ENCODE measurements at regions of chr12 and their contacts with region 1.

Region 1: GRCh38 chr12:123983822-123984485 is 10.9 kb downstream of the ZNF664 start:
- DNase-seq: no peak
- H3K4me3 ChIP-seq: no peak overlapping the region
- CTCF ChIP-seq: peak; percentile 64

Region 2: DNA sequence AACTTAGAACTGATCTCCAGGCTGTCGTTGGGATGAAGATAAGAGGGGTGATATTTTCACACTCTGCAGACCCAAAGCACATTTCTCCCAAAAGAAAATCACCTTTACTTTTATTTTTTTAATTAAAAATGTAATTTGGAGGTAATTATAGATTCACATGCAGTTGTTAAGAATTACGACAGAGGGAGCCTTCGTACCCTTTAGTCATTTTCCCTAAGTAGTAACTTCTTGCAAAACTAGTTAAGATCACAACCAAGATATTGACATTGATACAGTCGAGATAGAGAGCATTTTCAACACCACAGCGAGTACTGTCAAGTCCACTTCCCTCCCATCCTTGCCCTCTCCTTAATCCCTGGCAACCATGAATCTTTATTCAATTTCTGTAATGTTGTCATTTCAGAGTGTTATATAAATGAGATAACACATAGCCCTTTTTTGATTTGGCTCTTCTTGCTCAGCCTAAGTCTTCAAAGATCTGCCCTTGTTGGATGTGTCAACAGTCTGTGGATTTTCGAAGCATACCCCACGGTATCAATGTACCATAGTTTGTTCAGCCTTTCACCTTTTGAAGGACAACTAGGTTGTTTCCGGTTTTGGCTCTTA is 182.3 kb before region 1 on chr12:
- CTCF ChIA-PET with region 1: interaction called, 94 read pairs
- POLR2A ChIA-PET with region 1: no interaction called
- DNase-seq: no peak
- H3K4me3 ChIP-seq: no peak overlapping the region
- CTCF ChIP-seq: peak; percentile 37

Region 3: GRCh38 chr12:123961585-123962345 is 22.2 kb before region 1 on chr12:
- CTCF ChIA-PET with region 1: no interaction called
- POLR2A ChIA-PET with region 1: no interaction called
- DNase-seq: no peak
- H3K4me3 ChIP-seq: no peak overlapping the region
- CTCF ChIP-seq: no peak

Region 4: GRCh38 chr12:123995023-123995748 is 11.2 kb after region 1 on chr12:
- CTCF ChIA-PET with region 1: interaction called, 35 read pairs
- POLR2A ChIA-PET with region 1: interaction called, 4 read pairs
- DNase-seq: no peak
- H3K4me3 ChIP-seq: no peak overlapping the region
- CTCF ChIP-seq: no peak

Region 5: DNA sequence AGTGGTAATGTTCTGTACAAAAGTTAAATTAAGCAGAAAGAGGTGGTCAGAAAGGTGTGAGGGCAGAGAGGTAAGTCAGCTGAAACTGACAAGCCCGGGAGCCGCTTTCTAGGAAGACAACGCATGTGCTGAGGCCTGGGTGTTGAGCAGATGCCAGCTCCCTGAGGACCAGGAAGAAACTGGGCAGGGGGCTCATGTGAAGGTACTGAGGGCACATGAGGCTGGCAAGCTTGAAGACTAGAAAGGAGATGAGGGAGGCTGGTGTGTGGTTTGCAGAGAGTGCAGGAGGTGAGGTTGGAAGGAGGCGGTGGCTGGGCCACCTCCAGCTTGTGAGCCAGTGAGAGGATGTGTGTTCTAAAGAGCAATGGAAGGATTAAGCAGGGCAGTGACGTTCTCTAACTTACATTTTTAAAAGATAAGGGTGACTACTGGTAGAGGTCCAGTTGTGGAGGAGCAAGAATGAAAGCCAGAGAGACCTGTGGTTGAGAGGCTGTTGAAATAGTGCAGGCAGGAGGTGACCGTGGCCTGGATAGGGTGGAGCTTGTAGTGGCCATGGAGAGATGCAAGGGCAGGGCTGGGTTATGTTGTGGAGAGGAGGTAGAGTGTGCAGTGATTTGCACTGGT is 18.2 kb after region 1 on chr12:
- CTCF ChIA-PET with region 1: interaction called, 35 read pairs
- POLR2A ChIA-PET with region 1: no interaction called
- DNase-seq: no peak
- H3K4me3 ChIP-seq: no peak overlapping the region
- CTCF ChIP-seq: no peak

Measured in AG04449 (cell line).